HEK293 (cell line): ENCODE measurements at regions of chr4 and their contacts with region 1.

Region 1: DNA sequence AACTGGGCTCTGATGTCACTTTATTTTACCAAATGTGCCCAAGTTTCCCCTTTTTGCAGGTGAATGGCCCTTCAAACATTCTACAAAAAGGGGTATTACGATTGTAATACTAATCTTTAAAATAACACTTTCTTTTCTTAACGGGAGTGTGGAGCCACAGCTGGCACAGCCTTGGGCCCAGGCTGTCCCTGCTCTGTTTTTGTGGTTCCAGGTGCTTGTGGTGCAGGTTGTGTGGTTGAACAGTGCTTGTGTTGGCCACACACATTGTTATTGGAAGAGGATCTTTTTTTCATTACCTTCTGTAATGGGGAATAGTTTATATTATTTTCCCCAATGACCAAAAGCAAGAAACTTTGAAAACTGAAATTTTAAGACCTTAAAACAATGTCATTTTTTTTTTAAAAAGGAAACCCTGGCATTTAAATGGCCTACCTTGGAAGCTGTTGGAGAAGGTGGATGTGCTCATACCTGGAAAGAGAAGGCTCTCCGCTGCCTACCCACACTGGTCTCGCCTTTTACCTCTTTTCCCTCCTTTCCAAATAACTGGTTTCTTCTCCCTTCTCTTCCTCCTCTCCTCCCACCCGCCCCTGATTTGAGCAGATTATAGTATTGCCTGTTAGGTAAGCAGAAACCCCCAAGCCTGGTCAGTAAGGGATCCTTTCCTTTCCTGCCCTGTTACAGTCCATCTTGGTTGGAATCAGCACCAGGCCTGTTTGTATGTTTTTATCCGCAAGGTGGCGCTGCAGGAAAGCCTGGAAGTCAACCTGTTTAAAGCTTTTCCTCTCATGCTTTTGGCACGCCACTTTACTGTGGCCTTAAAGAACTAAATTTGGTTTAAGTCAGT is 28.6 kb downstream of the HADH start:
- H3K4me3 ChIP-seq: no peak overlapping the region
- H3K27ac ChIP-seq: no peak overlapping the region
- H3K4me1 ChIP-seq: no peaks in the 10 kb centered on the region
- CTCF ChIP-seq: no peak; the same call in 1 of the 2 replicates

Region 2: DNA sequence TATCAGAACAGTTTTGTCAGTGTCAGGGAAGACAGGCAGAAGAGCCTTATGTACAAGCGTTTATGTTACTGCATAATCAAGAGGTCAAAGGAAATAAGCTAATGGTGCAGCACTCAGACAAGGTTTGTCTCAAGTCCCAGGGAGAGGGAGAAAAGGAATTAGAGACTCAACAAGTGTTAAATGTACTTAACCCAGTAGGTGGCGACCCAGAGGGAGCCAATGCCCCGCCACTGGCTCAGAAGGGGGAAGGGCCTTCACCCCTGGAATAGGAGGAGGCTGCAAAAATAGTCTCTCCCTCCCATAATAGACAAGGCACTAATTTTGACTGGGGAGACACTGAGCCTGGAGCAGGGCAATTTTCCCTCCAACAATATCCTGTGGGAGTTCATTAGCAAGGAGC is 284.1 kb before region 1 on chr4:
- CTCF ChIA-PET with region 1: no interaction called
- POLR2A ChIA-PET with region 1: no interaction called
- H3K4me3 ChIP-seq: no peak overlapping the region
- H3K27ac ChIP-seq: no peak overlapping the region
- H3K4me1 ChIP-seq: no peaks in the 10 kb centered on the region
- CTCF ChIP-seq: no peak

Region 3: GRCh38 chr4:107937040-107937785 is 81.0 kb before region 1 on chr4:
- CTCF ChIA-PET with region 1: no interaction called
- POLR2A ChIA-PET with region 1: no interaction called
- H3K4me3 ChIP-seq: no peak overlapping the region
- H3K27ac ChIP-seq: no peak overlapping the region
- H3K4me1 ChIP-seq: no peaks in the 10 kb centered on the region
- CTCF ChIP-seq: no peak

Region 4: DNA sequence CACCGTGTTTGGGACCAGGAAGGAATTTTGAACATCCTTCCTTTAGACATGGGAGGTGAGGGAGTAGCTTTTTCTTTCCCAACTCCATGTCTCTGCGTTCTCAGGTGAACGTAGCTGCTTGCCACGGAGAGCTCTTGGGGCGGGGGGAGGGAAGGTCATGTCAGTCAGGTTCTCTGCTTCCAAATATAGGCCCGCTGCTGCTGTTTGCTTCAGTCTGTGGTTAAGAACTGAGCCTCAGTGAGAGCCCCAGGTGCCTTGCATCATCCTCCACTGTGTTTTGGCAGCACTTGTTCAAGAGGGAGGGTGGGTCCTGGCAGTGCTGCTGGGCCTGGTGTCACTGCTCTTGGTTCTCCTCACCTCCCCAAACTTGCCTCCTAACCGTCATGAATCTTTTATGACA is 18.0 kb after region 1 on chr4:
- CTCF ChIA-PET with region 1: interaction called, 16 read pairs
- POLR2A ChIA-PET with region 1: no interaction called
- H3K4me3 ChIP-seq: no peak overlapping the region
- H3K27ac ChIP-seq: no peak overlapping the region
- H3K4me1 ChIP-seq: no peaks in the 10 kb centered on the region
- CTCF ChIP-seq: no peak

Region 5: GRCh38 chr4:108181704-108182103 is 163.4 kb after region 1 on chr4:
- CTCF ChIA-PET with region 1: no interaction called
- POLR2A ChIA-PET with region 1: no interaction called
- H3K4me3 ChIP-seq: no peak overlapping the region
- H3K27ac ChIP-seq: no peak overlapping the region
- H3K4me1 ChIP-seq: no peaks in the 10 kb centered on the region
- CTCF ChIP-seq: no peak

Region 6: GRCh38 chr4:108492816-108493595 is 474.7 kb after region 1 on chr4:
- CTCF ChIA-PET with region 1: interaction called, 18 read pairs
- POLR2A ChIA-PET with region 1: no interaction called
- H3K4me3 ChIP-seq: no peak overlapping the region
- H3K27ac ChIP-seq: no peak overlapping the region
- H3K4me1 ChIP-seq: no peaks in the 10 kb centered on the region
- CTCF ChIP-seq: no peak

Region 7: DNA sequence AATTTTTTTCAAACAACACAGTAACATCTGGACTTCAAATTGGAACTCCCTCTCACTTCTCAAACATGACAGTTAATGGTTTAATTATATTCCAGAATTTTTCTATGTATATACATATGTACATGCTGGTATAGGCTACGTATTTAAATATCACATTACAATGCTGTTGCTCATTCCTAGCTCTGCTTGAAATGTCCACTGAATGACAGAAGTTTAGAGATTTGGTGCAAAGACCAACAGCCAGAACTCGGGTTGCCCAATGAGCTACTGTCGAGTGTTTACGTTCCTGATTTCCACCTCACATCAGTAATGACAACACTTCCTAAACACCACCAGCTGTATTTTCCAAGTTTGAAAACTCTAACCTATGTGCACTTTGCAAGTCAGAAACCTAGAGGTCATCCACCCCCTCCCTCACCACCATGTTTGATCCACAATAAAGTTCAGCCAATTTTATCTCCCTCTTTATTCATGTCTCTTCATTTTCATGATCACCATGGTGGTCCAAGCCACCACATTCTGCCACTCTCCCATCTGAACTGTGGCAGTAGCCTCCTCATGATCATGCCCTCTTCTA is 552.8 kb after region 1 on chr4:
- CTCF ChIA-PET with region 1: interaction called, 45 read pairs
- POLR2A ChIA-PET with region 1: no interaction called
- H3K4me3 ChIP-seq: no peak overlapping the region
- H3K27ac ChIP-seq: no peak overlapping the region
- H3K4me1 ChIP-seq: no peaks in the 10 kb centered on the region
- CTCF ChIP-seq: no peak